Breast epithelium (tissue), 4 donors: ENCODE measurements at regions of chr13 and their contacts with region 1.

Region 1: DNA sequence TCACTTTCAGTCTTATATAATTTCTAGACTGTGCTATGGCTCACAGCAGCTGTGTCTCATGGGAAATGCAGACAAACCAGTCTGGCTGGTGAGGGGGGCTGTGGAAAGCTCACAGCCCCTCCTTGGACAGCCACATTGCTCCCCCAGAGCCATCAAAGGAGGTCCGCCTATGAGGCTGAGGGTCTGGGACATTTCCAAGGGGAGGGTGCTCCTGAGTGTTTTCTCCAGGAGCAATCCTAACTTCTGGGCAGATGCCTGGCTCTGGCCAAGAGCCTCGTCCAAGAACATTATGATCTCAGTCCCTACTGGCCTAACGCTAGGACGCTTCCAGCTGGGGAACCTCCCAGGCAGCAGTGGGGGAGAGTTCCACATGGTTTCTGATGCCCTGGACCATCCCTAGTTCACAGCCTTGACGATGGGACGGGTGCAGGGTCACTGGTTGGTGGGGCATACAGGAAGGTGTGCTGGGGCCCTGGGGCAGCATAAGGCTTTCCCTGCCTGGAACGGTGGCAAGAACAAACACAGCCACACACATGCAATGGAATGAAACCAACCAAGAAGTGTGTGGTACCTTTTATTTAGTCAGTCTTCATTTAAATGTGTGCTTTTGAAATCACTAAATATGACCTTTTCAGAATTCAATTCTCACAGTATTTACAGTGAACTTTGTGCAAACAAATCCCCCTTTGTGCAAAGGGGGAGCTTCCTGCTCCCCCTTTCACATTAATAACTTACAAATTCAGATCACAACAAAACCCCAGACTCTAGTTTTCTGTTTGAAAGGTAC is 60.6 kb downstream of the CDADC1 start:
- DNase-seq: peak; percentile 68 to 93
- H3K4me3 ChIP-seq: peak overlapping the region in 1 of 3 donors; percentile 38
- H3K27ac ChIP-seq: peak overlapping the region; percentile 86 to 94
- H3K4me1 ChIP-seq: peaks cover 3 to 8% of the 10 kb centered on the region in 2 donors
- H3K27me3 ChIP-seq: no peaks in the 10 kb centered on the region
- CTCF ChIP-seq: peak in 1 of 3 donors; percentile 19
- POLR2A ChIP-seq: no peak

Region 2: DNA sequence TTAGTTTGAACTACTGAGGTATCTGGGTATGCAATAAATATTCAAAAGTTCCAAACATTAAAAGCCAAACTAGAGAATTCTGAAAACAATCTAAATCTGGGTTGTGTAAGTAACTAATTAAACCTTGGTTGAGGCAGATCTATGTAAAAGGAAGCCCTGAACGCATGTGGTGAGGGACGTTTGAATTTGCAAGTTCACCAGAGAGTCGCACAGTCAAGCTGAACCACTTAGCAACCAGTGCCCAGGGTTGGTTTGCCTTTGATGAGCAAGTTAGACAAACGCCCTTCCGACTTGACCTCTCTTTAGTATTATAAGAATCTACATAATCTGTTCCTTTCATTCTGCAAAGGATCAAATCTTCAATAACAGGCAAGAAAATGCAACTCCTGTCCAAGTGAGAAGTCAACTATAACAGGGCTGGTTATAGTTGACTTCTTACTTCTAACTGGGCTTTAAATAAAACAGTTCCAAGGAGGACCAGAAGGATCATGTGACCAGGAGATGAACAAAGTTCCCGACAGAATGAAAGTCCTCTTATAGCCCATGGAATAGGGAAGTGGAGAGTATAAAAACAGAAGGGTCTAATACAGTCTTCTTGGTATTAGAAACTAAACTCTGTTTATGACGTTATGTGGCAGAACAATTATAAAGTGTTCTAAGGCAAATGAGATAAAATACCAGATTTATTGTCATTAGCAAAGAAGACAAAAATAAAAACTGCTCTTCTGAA is 228.0 kb after region 1 on chr13:
- intact Hi-C with region 1: loop called (anchors 5 kb)
- DNase-seq: no peak
- H3K4me3 ChIP-seq: no peak overlapping the region
- H3K27ac ChIP-seq: no peak overlapping the region
- H3K4me1 ChIP-seq: no peaks in the 10 kb centered on the region
- H3K27me3 ChIP-seq: no peaks in the 10 kb centered on the region
- CTCF ChIP-seq: no peak
- POLR2A ChIP-seq: no peak

Region 3: GRCh38 chr13:50136226-50136625 is 827.9 kb after region 1 on chr13:
- intact Hi-C with region 1: loop called (anchors 5 kb)
- DNase-seq: no peak
- H3K4me3 ChIP-seq: no peak overlapping the region
- H3K27ac ChIP-seq: no peak overlapping the region
- H3K4me1 ChIP-seq: no peaks in the 10 kb centered on the region
- H3K27me3 ChIP-seq: peaks cover 2 to 21% of the 10 kb centered on the region in 2 donors
- CTCF ChIP-seq: no peak
- POLR2A ChIP-seq: no peak